ENCODE measurements at regions of chr2 and their contacts with region 1.

Region 1: GRCh38 chr2:78979380-78980151 is 45.9 kb upstream of the REG3G start:
- DNase-seq: peak; percentile 69
- H3K4me3 ChIP-seq: no peak overlapping the region
- H3K27ac ChIP-seq: no peak overlapping the region
- H3K4me1 ChIP-seq: no peaks in the 10 kb centered on the region
- H3K27me3 ChIP-seq: no peaks in the 10 kb centered on the region
- CTCF ChIP-seq: peak; percentile 69 to 75
- POLR2A ChIP-seq: no peak

Region 2: DNA sequence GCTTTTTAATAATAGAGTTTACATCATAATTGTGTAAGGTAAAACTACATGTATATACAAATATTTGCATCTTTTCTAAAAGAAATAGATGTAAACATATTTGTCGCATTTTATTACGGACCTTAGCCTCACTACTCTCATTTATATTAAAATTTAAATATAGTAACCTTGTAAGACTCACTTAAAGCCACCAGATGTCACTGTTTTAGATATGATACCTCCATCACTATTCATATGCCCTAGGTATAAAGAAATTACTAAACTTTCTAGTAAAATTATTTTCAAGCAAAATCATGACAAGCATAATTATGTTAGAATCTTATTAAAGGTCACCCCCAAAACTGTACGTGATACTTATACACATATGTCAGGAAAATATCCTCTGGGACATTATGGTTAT is 628.4 kb before region 1 on chr2:
- CTCF ChIA-PET with region 1: interaction called, 11 read pairs
- POLR2A ChIA-PET with region 1: no interaction called
- dilution Hi-C with region 1: no loop called
- intact Hi-C with region 1: loop called (anchors 1 kb)
- DNase-seq: peak; percentile 2
- H3K4me3 ChIP-seq: no peak overlapping the region
- H3K27ac ChIP-seq: no peak overlapping the region
- H3K4me1 ChIP-seq: no peaks in the 10 kb centered on the region
- H3K27me3 ChIP-seq: no peaks in the 10 kb centered on the region
- CTCF ChIP-seq: no peak
- POLR2A ChIP-seq: no peak

Region 3: GRCh38 chr2:78676921-78677696 is 302.5 kb before region 1 on chr2:
- CTCF ChIA-PET with region 1: interaction called, 21 read pairs
- POLR2A ChIA-PET with region 1: no interaction called
- dilution Hi-C with region 1: no loop called
- intact Hi-C with region 1: loop called (anchors 1 kb)
- DNase-seq: no peak
- H3K4me3 ChIP-seq: no peak overlapping the region
- H3K27ac ChIP-seq: no peak overlapping the region
- H3K4me1 ChIP-seq: no peaks in the 10 kb centered on the region
- H3K27me3 ChIP-seq: no peaks in the 10 kb centered on the region
- CTCF ChIP-seq: no peak
- POLR2A ChIP-seq: no peak

Region 4: DNA sequence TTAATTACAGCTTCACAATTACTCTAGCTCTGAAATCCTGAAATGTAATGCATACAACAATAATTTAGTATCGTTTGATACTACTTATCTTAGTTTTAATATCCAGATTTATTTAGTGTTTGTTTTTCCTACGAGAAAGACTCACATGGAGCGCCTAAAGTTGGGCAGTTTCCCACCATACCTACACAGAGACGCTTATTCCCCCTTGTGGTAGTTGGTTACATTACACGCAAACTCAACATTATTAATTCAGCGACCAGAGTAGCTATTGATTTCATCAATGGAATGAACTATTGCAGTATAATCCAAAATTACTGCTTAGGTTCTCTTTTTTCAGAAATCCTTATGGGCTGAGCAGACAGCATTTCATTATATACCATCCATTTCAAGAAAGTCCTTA is 118.0 kb before region 1 on chr2:
- CTCF ChIA-PET with region 1: interaction called, 3 read pairs
- POLR2A ChIA-PET with region 1: no interaction called
- dilution Hi-C with region 1: no loop called
- intact Hi-C with region 1: loop called (anchors 10 kb)
- DNase-seq: peak; percentile 33
- H3K4me3 ChIP-seq: no peak overlapping the region
- H3K27ac ChIP-seq: no peak overlapping the region
- H3K4me1 ChIP-seq: no peaks in the 10 kb centered on the region
- H3K27me3 ChIP-seq: no peaks in the 10 kb centered on the region
- CTCF ChIP-seq: peak; percentile 31 to 44
- POLR2A ChIP-seq: no peak

Region 5: DNA sequence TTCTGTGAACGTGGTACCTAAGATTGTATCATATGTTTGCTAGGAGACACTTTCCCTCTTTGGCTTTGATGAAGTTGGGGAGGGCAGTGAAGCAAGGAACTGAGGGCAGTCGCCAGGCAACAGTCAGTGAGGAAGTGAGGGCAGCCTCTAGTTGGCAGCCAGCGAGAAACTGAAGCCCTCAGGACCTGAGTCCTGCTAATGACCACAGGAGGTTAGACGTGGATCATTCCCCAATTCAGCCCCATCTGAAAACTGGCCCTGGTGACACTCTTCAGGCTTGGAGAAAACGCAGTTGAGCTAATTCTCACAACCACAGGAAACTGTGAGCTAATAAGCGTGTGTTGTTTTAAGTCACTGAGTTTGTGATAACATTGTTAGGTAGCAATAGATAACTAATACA is 38.6 kb before region 1 on chr2:
- CTCF ChIA-PET with region 1: no interaction called
- POLR2A ChIA-PET with region 1: no interaction called
- dilution Hi-C with region 1: no loop called
- intact Hi-C with region 1: loop called (anchors 2 kb)
- DNase-seq: peak; percentile 95
- H3K4me3 ChIP-seq: no peak overlapping the region
- H3K27ac ChIP-seq: peak overlapping the region; percentile 97
- H3K4me1 ChIP-seq: peaks cover 17% of the 10 kb centered on the region
- H3K27me3 ChIP-seq: no peaks in the 10 kb centered on the region
- CTCF ChIP-seq: no peak
- POLR2A ChIP-seq: no peak

Measured in endothelial cell of umbilical vein (primary cell).